HepG2 (cell line): ENCODE measurements at regions of chr7 and their contacts with region 1.

Region 1: GRCh38 chr7:24587848-24588247 is 14.6 kb downstream of the PALS2 start:
- DNase-seq: peak; percentile 46
- ATAC-seq: peak; percentile 88
- H3K4me3 ChIP-seq: no peak overlapping the region
- H3K27ac ChIP-seq: no peak overlapping the region
- H3K4me1 ChIP-seq: no peaks in the 10 kb centered on the region
- H3K27me3 ChIP-seq: no peaks in the 10 kb centered on the region
- CTCF ChIP-seq: peak; percentile 67
- EP300 ChIP-seq: no peak
- POLR2A ChIP-seq: no peak
- RAD21 ChIP-seq: peak; percentile 65

Region 2: GRCh38 chr7:24290004-24290641 is 297.7 kb before region 1 on chr7:
- CTCF ChIA-PET with region 1: no interaction called
- POLR2A ChIA-PET with region 1: no interaction called
- in situ Hi-C with region 1: no loop called
- intact Hi-C with region 1: loop called (anchors 5 kb)
- DNase-seq: peak; percentile 60
- ATAC-seq: peak; percentile 97
- H3K4me3 ChIP-seq: no peak overlapping the region
- H3K27ac ChIP-seq: no peak overlapping the region
- H3K4me1 ChIP-seq: no peaks in the 10 kb centered on the region
- H3K27me3 ChIP-seq: peaks cover 2 to 8% of the 10 kb centered on the region in 2 experiments; a peak in 2 of 5 replicates
- CTCF ChIP-seq: peak; percentile 75
- EP300 ChIP-seq: no peak
- POLR2A ChIP-seq: no peak
- RAD21 ChIP-seq: peak; percentile 42; the same call in 1 of the 2 replicates

Region 3: GRCh38 chr7:24401628-24402593 is 185.9 kb before region 1 on chr7:
- CTCF ChIA-PET with region 1: interaction called, 11 read pairs
- POLR2A ChIA-PET with region 1: no interaction called
- in situ Hi-C with region 1: no loop called
- intact Hi-C with region 1: loop called (anchors 1 kb)
- DNase-seq: peak; percentile 31
- ATAC-seq: peak; percentile 56; the same call in 2 of the 3 replicates
- H3K4me3 ChIP-seq: no peak overlapping the region
- H3K27ac ChIP-seq: no peak overlapping the region
- H3K4me1 ChIP-seq: no peaks in the 10 kb centered on the region
- H3K27me3 ChIP-seq: no peaks in the 10 kb centered on the region
- CTCF ChIP-seq: peak; percentile 50
- EP300 ChIP-seq: no peak
- POLR2A ChIP-seq: no peak
- RAD21 ChIP-seq: no peak; the same call in 1 of the 2 replicates

Region 4: DNA sequence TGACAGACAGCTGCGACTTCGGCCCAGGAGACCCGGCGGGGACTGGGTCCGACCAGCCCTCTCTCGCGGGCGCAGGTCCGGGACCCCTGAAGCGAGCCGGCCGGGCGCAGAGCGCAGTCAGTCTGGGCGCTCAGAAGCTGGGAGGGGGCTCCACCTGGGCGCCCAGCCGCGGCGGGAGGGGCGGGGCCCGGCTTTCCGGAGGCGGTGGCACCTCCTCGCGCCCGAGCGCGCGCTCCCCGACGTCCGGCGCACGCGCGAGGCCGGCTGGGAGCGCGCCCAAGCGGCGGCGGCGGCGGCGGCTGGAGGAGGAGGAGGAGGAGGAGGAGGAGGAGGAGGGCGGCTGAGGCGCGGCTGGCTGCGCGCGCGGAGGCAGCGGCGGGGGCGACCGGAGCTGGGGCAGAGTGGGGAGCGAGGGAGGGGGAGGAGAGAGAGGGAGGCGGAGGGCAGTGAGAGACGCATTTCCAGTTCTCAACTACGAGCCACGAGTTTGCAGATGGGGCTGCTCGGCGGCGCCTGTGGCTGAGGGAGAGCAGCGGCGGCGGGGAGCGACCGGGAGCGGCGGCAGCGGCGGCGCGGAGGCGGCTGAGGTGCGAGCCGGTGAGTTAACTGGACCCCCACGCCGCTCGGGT is 14.7 kb before region 1 on chr7 and contains the start of gene PALS2:
- CTCF ChIA-PET with region 1: no interaction called
- POLR2A ChIA-PET with region 1: no interaction called
- in situ Hi-C with region 1: no loop called
- intact Hi-C with region 1: no loop called
- DNase-seq: peak; percentile 29
- ATAC-seq: peak; percentile 68
- H3K4me3 ChIP-seq: peak within 1 kb of the TSS; percentile 66 to 85 (median 78)
- H3K27ac ChIP-seq: peak within 1 kb of the TSS; percentile 36
- H3K4me1 ChIP-seq: peaks cover 29% of the 10 kb centered on the region
- H3K27me3 ChIP-seq: peaks cover 0 to 29% of the 10 kb centered on the region in 2 experiments; a peak in 4 of 5 replicates
- CTCF ChIP-seq: no peak
- EP300 ChIP-seq: no peak
- POLR2A ChIP-seq: no peak
- RAD21 ChIP-seq: no peak
- total RNA-seq, gene PALS2: 14.4 and 21.9 TPM in 2 replicates